ENCODE measurements at regions of chr11 and their contacts with region 1.

Region 1: GRCh38 chr11:122505304-122506006 is 150.1 kb upstream of the UBASH3B start:
- DNase-seq: no peak
- H3K4me3 ChIP-seq: no peak overlapping the region
- H3K27ac ChIP-seq: no peak overlapping the region
- H3K4me1 ChIP-seq: peaks cover 0 to 7% (median 0%) of the 10 kb centered on the region in 6 donors
- H3K27me3 ChIP-seq: peaks cover 0 to 43% (median 0%) of the 10 kb centered on the region in 7 donors
- CTCF ChIP-seq: peak; percentile 54 to 87 (median 76)
- POLR2A ChIP-seq: no peak

Region 2: GRCh38 chr11:121595717-121596161 is 909.7 kb before region 1 on chr11:
- intact Hi-C with region 1: no loop called
- DNase-seq: no peak
- H3K4me3 ChIP-seq: no peak overlapping the region
- H3K27ac ChIP-seq: no peak overlapping the region
- H3K4me1 ChIP-seq: peaks cover 0 to 9% (median 7%) of the 10 kb centered on the region in 6 donors
- H3K27me3 ChIP-seq: no peaks in the 10 kb centered on the region
- CTCF ChIP-seq: no peak
- POLR2A ChIP-seq: no peak

Region 3: GRCh38 chr11:121655537-121656327 is 849.7 kb before region 1 on chr11:
- intact Hi-C with region 1: loop called (anchors 5 kb)
- DNase-seq: peak; percentile 94
- H3K4me3 ChIP-seq: peak overlapping the region; percentile 20 to 70 (median 41)
- H3K27ac ChIP-seq: peak overlapping the region; percentile 63 to 82 (median 72)
- H3K4me1 ChIP-seq: peaks cover 4 to 19% (median 15%) of the 10 kb centered on the region in 6 donors
- H3K27me3 ChIP-seq: peaks cover 0 to 16% (median 0%) of the 10 kb centered on the region in 7 donors
- CTCF ChIP-seq: peak; percentile 57 to 88 (median 79)
- POLR2A ChIP-seq: no peak

Region 4: DNA sequence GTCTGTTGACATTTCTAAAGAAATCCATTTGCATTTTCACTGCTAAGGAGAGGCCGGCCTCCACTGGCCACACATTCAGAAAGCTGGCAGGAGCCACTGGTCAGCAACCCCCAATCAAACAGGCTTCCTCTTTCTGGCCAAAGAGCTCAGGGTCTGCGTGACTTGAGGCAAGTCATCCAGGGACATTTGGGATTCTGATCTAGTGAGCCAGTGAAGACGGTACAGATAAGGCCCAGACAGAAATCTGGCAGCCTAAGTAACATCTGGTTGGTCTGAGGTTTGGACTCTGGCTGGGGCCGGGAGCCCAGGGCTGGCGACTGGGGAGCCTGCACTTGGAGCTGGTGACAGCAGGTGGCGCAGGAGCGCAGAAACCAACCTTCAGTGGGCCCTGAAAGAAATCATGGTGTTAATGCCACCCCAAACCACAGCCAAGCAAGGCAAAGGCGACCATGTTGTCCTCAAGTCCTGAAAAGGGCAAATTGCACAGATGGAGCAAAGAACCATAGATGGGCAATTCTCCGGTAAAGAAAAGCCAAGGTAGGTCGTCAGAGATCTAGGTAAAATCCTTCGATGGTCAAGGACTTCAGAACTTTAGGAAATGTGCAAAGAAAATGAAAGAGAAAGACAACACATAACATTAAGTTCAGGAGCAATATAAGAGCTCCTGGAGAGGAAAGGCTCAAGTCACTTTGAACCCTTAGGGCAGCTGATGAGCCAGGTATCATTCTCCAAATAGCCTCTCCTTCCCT is 290.0 kb before region 1 on chr11:
- intact Hi-C with region 1: loop called (anchors 2 kb)
- DNase-seq: peak; percentile 85
- H3K4me3 ChIP-seq: no peak overlapping the region
- H3K27ac ChIP-seq: peak overlapping the region in 1 of 8 donors; percentile 14
- H3K4me1 ChIP-seq: peaks cover 0 to 10% (median 8%) of the 10 kb centered on the region in 6 donors
- H3K27me3 ChIP-seq: peaks cover 0 to 21% (median 0%) of the 10 kb centered on the region in 7 donors
- CTCF ChIP-seq: peak; percentile 55 to 95 (median 84)
- POLR2A ChIP-seq: no peak

Measured in spleen (tissue), 13 donors.